ENCODE measurements at regions of chr20 and their contacts with region 1.

Region 1: DNA sequence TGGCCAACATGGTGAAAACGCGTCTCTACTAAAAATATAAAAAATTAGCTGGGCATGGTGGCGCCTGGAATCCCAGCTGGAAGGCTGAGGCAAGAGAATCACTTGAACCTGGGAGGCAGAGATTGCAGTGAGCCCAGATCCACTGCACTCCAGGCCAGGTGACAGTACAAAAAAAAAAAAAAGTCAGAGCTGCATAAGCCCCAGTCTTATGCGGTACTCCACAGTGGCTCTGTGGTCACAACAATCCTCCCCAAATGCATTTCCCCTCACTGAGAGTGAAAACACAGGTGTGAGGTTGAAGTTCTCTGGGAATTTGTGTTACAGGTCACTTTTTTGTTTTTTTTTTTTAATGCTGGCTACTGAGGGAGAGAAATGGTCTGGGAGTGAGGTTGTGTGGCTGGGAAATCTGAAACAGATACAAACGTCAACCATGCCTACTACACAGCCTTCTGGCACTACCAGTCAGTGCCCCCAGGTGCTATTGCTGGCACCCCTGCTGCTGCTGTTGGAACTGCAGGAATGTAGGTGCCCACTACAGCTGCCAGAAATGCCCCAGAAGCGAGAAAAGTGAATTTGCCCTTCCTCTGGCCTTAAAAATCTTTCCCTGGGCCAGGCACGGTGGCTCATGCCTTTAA is 5.7 kb downstream of the MRPS26 start:
- DNase-seq: peak in 1 of 9 experiments; percentile 35
- ATAC-seq: peak; percentile 58
- H3K4me3 ChIP-seq: no peak overlapping the region
- H3K4me3 Mint-ChIP-seq: no peak overlapping the region
- H3K27ac ChIP-seq: no peak overlapping the region
- H3K27ac Mint-ChIP-seq: no peak overlapping the region
- H3K4me1 ChIP-seq: peaks cover 9% of the 10 kb centered on the region
- H3K4me1 Mint-ChIP-seq: peaks cover 18% of the 10 kb centered on the region
- H3K27me3 ChIP-seq: no peaks in the 10 kb centered on the region
- H3K27me3 Mint-ChIP-seq: no peaks in the 10 kb centered on the region
- CTCF ChIP-seq: no peak

Region 2: GRCh38 chr20:2900845-2901592 is 150.5 kb before region 1 on chr20:
- CTCF ChIA-PET with region 1: no interaction called
- POLR2A ChIA-PET with region 1: no interaction called
- intact Hi-C with region 1: no loop called
- DNase-seq: peak in 1 of 9 experiments; percentile 18
- ATAC-seq: peak; percentile 44
- H3K4me3 ChIP-seq: no peak overlapping the region
- H3K4me3 Mint-ChIP-seq: peak overlapping the region; percentile 42
- H3K27ac ChIP-seq: peak overlapping the region in 1 of 2 experiments; percentile 37
- H3K27ac Mint-ChIP-seq: peak overlapping the region; percentile 9
- H3K4me1 ChIP-seq: peaks cover 24% of the 10 kb centered on the region
- H3K4me1 Mint-ChIP-seq: peaks cover 61% of the 10 kb centered on the region
- H3K27me3 ChIP-seq: no peaks in the 10 kb centered on the region
- H3K27me3 Mint-ChIP-seq: no peaks in the 10 kb centered on the region
- CTCF ChIP-seq: no peak

Region 3: GRCh38 chr20:3082306-3082951 is 30.9 kb after region 1 on chr20:
- CTCF ChIA-PET with region 1: interaction called, 6 read pairs
- POLR2A ChIA-PET with region 1: no interaction called
- intact Hi-C with region 1: loop called in 1 of 2 experiments (anchors 1 kb)
- DNase-seq: peak in 1 of 9 experiments; percentile 31
- ATAC-seq: peak; percentile 45
- H3K4me3 ChIP-seq: peak overlapping the region in 1 of 2 experiments; percentile 30
- H3K4me3 Mint-ChIP-seq: peak overlapping the region; percentile 61
- H3K27ac ChIP-seq: no peak overlapping the region
- H3K27ac Mint-ChIP-seq: no peak overlapping the region
- H3K4me1 ChIP-seq: peaks cover 23% of the 10 kb centered on the region
- H3K4me1 Mint-ChIP-seq: peaks cover 16% of the 10 kb centered on the region
- H3K27me3 ChIP-seq: peaks cover 18 to 19% of the 10 kb centered on the region in 2 experiments
- H3K27me3 Mint-ChIP-seq: peaks cover 42% of the 10 kb centered on the region
- CTCF ChIP-seq: no peak

Region 4: DNA sequence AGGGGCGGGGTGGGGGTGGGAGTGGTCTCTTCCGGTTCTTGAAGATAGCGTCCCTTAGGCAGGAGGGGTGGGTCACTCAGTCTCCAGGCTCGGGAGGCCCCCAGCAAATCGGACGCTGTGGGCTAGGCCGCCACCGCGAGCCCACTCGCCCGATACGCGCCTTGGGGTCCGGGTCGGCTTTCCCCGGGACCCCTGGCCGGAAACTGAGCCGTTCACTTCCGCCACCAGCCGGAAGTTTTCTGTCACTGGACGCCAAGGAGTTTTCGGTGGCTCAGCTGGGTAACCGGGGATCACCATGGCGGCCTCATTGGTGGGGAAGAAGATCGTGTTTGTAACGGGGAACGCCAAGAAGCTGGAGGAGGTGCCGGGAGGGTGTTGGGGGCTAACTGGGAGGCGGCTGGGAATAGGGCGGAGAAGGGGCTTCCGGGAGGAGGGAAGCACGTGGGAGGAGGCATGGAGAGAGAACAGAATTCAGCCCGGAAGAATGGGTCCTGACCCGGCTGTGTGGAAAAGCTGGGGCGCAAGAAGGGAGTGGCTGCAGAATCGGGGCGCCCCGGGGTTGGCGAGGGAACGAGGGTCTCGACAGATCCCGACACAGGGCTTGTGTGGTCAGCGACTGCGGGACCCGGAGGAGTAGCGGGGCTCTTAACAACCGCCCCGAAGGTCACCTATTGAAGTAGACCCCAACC is 157.9 kb after region 1 on chr20 and contains the start of gene ITPA:
- CTCF ChIA-PET with region 1: interaction called, 5 read pairs
- POLR2A ChIA-PET with region 1: interaction called, 3 read pairs
- intact Hi-C with region 1: loop called (anchors 5 kb)
- DNase-seq: peak in 8 of 9 experiments; percentile 40 to 79 (median 62)
- ATAC-seq: peak; percentile 26
- H3K4me3 ChIP-seq: peak within 1 kb of the TSS; percentile 64 to 71
- H3K4me3 Mint-ChIP-seq: peak within 1 kb of the TSS; percentile 88
- H3K27ac ChIP-seq: peak within 1 kb of the TSS; percentile 72 to 90
- H3K27ac Mint-ChIP-seq: peak within 1 kb of the TSS; percentile 91
- H3K4me1 ChIP-seq: peaks cover 20% of the 10 kb centered on the region
- H3K4me1 Mint-ChIP-seq: peaks cover 23% of the 10 kb centered on the region
- H3K27me3 ChIP-seq: no peaks in the 10 kb centered on the region
- H3K27me3 Mint-ChIP-seq: no peaks in the 10 kb centered on the region
- CTCF ChIP-seq: no peak
- total RNA-seq, gene ITPA: 19.4 to 21.3 TPM

Region 5: DNA sequence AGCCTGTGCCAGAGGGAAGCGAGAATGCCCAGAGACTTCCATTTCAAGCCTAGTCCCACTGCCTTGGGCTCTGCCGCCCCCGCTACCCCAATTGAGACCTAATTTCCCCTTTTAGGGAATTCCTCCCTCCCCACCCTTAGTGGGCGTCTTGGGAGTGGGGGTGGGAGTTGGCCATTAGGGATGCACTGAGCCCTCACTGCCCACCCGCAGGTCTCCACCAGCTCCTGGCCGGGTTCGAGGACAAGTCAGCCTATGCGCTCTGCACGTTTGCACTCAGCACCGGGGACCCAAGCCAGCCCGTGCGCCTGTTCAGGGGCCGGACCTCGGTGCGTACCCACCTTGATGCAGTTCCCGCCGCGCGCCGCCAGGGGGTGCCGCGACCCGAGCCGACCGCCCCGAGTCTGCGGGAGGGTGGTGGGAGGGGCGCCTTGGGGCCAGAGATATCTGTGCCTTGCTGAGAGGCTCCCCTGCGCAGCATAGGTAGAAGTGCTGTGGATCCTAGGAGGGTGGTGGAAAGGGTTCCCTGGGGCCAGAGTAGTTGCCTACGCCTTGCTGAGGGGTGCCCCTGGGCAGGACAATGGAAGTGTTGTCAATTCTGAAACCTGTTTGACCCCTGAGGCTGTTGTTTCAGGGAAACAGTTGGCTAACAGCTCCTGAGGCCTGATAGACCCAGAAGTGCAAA is 166.9 kb after region 1 on chr20:
- CTCF ChIA-PET with region 1: interaction called, 5 read pairs
- POLR2A ChIA-PET with region 1: interaction called, 6 read pairs
- intact Hi-C with region 1: loop called in 1 of 2 experiments (anchors 5 kb)
- DNase-seq: peak; percentile 63 to 85 (median 72)
- ATAC-seq: peak; percentile 84
- H3K4me3 ChIP-seq: no peak overlapping the region
- H3K4me3 Mint-ChIP-seq: no peak overlapping the region
- H3K27ac ChIP-seq: no peak overlapping the region
- H3K27ac Mint-ChIP-seq: no peak overlapping the region
- H3K4me1 ChIP-seq: peaks cover 19% of the 10 kb centered on the region
- H3K4me1 Mint-ChIP-seq: peaks cover 19% of the 10 kb centered on the region
- H3K27me3 ChIP-seq: no peaks in the 10 kb centered on the region
- H3K27me3 Mint-ChIP-seq: no peaks in the 10 kb centered on the region
- CTCF ChIP-seq: peak; percentile 88

Region 6: GRCh38 chr20:3312940-3313682 is 261.6 kb after region 1 on chr20:
- CTCF ChIA-PET with region 1: interaction called, 7 read pairs
- POLR2A ChIA-PET with region 1: no interaction called
- intact Hi-C with region 1: loop called in 1 of 2 experiments (anchors 1 kb)
- DNase-seq: no peak
- ATAC-seq: no peak
- H3K4me3 ChIP-seq: no peak overlapping the region
- H3K4me3 Mint-ChIP-seq: no peak overlapping the region
- H3K27ac ChIP-seq: no peak overlapping the region
- H3K27ac Mint-ChIP-seq: peak overlapping the region; percentile 41
- H3K4me1 ChIP-seq: no peaks in the 10 kb centered on the region
- H3K4me1 Mint-ChIP-seq: peaks cover 2% of the 10 kb centered on the region
- H3K27me3 ChIP-seq: no peaks in the 10 kb centered on the region
- H3K27me3 Mint-ChIP-seq: no peaks in the 10 kb centered on the region
- CTCF ChIP-seq: no peak

Region 7: GRCh38 chr20:3563548-3564177 is 512.2 kb after region 1 on chr20:
- CTCF ChIA-PET with region 1: no interaction called
- POLR2A ChIA-PET with region 1: no interaction called
- intact Hi-C with region 1: loop called in 1 of 2 experiments (anchors 5 kb)
- DNase-seq: peak in 2 of 9 experiments; percentile 39 to 54
- ATAC-seq: no peak
- H3K4me3 ChIP-seq: no peak overlapping the region
- H3K4me3 Mint-ChIP-seq: no peak overlapping the region
- H3K27ac ChIP-seq: no peak overlapping the region
- H3K27ac Mint-ChIP-seq: no peak overlapping the region
- H3K4me1 ChIP-seq: no peaks in the 10 kb centered on the region
- H3K4me1 Mint-ChIP-seq: no peaks in the 10 kb centered on the region
- H3K27me3 ChIP-seq: no peaks in the 10 kb centered on the region
- H3K27me3 Mint-ChIP-seq: no peaks in the 10 kb centered on the region
- CTCF ChIP-seq: peak; percentile 56

Measured in CD8-positive, alpha-beta T cell (primary cell).